ENCODE measurements at regions of chr12 and their contacts with region 1.

Region 1: GRCh38 chr12:105705765-105706164 is 375.3 kb downstream of the C12orf75 start:
- DNase-seq: peak; percentile 30
- H3K4me3 ChIP-seq: no peak overlapping the region
- H3K27ac ChIP-seq: no peak overlapping the region
- H3K4me1 ChIP-seq: peaks cover 8% of the 10 kb centered on the region
- H3K27me3 ChIP-seq: no peaks in the 10 kb centered on the region
- CTCF ChIP-seq: peak; percentile 74 to 80

Region 2: DNA sequence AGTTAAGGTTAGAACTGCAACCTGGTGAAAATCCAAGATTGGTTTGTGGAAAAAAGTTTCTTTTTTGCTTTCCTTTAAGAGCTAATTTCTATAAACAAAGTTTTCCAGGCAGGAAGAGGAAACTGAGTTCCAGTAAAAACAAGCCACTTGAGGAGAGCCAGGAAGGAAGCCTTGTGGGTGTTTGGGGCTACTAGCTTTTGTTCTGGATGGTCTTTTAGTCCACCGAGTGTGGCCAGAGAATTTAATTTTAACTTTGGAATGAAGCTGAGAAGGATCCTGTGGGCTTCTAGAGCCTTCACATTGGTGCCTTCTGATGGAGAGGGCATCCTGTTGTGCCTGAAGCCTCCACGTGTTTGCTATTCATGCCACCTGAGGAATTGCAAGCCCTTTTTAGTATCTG is 47.4 kb before region 1 on chr12:
- CTCF ChIA-PET with region 1: no interaction called
- dilution Hi-C with region 1: no loop called
- in situ Hi-C with region 1: no loop called
- intact Hi-C with region 1: loop called (anchors 1 kb)
- DNase-seq: no peak
- H3K4me3 ChIP-seq: no peak overlapping the region
- H3K27ac ChIP-seq: peak overlapping the region; percentile 78
- H3K4me1 ChIP-seq: peaks cover 28% of the 10 kb centered on the region
- H3K27me3 ChIP-seq: no peaks in the 10 kb centered on the region
- CTCF ChIP-seq: no peak

Region 3: DNA sequence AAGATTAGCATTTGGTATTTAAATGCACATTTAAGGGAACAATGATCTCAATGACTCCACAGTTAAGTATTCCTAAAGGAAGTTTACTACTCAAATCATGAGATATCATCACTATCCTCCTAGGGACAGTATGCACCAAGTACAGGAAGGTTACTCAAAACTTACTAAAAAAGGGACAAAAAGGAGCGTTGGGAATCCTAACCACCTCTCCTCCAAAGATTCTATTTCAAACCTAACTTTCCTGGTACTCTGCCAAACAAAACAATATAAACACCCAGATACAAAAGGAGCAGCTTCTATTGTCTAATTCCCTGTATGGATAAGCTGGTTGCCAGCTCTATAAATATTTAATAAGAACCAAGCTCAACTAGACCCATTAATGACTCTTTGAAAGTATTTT is 55.3 kb after region 1 on chr12:
- CTCF ChIA-PET with region 1: no interaction called
- dilution Hi-C with region 1: no loop called
- in situ Hi-C with region 1: no loop called
- intact Hi-C with region 1: no loop called
- DNase-seq: peak; percentile 17
- H3K4me3 ChIP-seq: no peak overlapping the region
- H3K27ac ChIP-seq: no peak overlapping the region
- H3K4me1 ChIP-seq: no peaks in the 10 kb centered on the region
- H3K27me3 ChIP-seq: no peaks in the 10 kb centered on the region
- CTCF ChIP-seq: no peak

Measured in mammary epithelial cell (primary cell).